Activated CD8-positive, alpha-beta T cell treated with anti-CD3 and anti-CD28 coated beads for 36 hours (primary cell): ENCODE measurements at regions of chr2 and their contacts with region 1.

Region 1: DNA sequence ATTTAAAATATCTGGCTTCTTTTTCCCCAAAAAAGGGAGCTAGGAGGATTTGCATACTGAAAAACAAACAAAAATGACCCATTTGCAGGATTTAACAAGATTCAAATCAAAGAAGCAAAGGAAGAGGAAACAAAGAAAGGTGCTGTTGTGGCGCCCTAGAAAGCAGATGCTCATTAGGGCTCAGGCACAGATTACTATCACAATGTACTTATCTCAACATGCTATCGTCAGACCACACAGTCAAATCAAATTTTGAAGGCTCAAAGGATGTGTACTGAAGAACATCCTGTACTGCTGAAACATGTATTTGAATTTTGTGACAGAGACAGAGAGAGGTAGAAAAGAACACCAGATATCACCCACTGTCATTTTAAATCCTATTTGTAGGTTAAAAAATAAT is 10.9 kb downstream of the RBMS1 start:
- DNase-seq: peak; percentile 41
- ATAC-seq: peak; percentile 73
- H3K4me3 Mint-ChIP-seq: peak overlapping the region; percentile 56
- H3K27ac Mint-ChIP-seq: peak overlapping the region; percentile 85
- H3K4me1 Mint-ChIP-seq: peaks cover 67% of the 10 kb centered on the region
- H3K27me3 Mint-ChIP-seq: no peaks in the 10 kb centered on the region
- CTCF ChIP-seq: no peak

Region 2: GRCh38 chr2:160210599-160211138 is 272.0 kb before region 1 on chr2:
- CTCF ChIA-PET with region 1: no interaction called
- POLR2A ChIA-PET with region 1: no interaction called
- intact Hi-C with region 1: no loop called
- DNase-seq: peak; percentile 82
- ATAC-seq: peak; percentile 86
- H3K4me3 Mint-ChIP-seq: no peak overlapping the region
- H3K27ac Mint-ChIP-seq: no peak overlapping the region
- H3K4me1 Mint-ChIP-seq: peaks cover 32% of the 10 kb centered on the region
- H3K27me3 Mint-ChIP-seq: peaks cover 5% of the 10 kb centered on the region
- CTCF ChIP-seq: peak; percentile 90

Region 3: GRCh38 chr2:160332318-160332717 is 150.4 kb before region 1 on chr2:
- CTCF ChIA-PET with region 1: no interaction called
- POLR2A ChIA-PET with region 1: no interaction called
- intact Hi-C with region 1: loop called (anchors 10 kb)
- DNase-seq: peak; percentile 22
- ATAC-seq: peak; percentile 45
- H3K4me3 Mint-ChIP-seq: peak overlapping the region; percentile 11
- H3K27ac Mint-ChIP-seq: peak overlapping the region; percentile 76
- H3K4me1 Mint-ChIP-seq: peaks cover 91% of the 10 kb centered on the region
- H3K27me3 Mint-ChIP-seq: no peaks in the 10 kb centered on the region
- CTCF ChIP-seq: no peak

Region 4: GRCh38 chr2:160493227-160494028 is 10.8 kb after region 1 on chr2 and contains the start of gene RBMS1:
- CTCF ChIA-PET with region 1: interaction called, 10 read pairs
- POLR2A ChIA-PET with region 1: interaction called, 3 read pairs
- intact Hi-C with region 1: no loop called
- DNase-seq: peak; percentile 56
- ATAC-seq: peak; percentile 32
- H3K4me3 Mint-ChIP-seq: peak within 1 kb of the TSS; percentile 93
- H3K27ac Mint-ChIP-seq: peak within 1 kb of the TSS; percentile 94
- H3K4me1 Mint-ChIP-seq: peaks cover 43% of the 10 kb centered on the region
- H3K27me3 Mint-ChIP-seq: no peaks in the 10 kb centered on the region
- CTCF ChIP-seq: no peak
- total RNA-seq, gene RBMS1: 35.8 to 38.6 TPM

Region 5: DNA sequence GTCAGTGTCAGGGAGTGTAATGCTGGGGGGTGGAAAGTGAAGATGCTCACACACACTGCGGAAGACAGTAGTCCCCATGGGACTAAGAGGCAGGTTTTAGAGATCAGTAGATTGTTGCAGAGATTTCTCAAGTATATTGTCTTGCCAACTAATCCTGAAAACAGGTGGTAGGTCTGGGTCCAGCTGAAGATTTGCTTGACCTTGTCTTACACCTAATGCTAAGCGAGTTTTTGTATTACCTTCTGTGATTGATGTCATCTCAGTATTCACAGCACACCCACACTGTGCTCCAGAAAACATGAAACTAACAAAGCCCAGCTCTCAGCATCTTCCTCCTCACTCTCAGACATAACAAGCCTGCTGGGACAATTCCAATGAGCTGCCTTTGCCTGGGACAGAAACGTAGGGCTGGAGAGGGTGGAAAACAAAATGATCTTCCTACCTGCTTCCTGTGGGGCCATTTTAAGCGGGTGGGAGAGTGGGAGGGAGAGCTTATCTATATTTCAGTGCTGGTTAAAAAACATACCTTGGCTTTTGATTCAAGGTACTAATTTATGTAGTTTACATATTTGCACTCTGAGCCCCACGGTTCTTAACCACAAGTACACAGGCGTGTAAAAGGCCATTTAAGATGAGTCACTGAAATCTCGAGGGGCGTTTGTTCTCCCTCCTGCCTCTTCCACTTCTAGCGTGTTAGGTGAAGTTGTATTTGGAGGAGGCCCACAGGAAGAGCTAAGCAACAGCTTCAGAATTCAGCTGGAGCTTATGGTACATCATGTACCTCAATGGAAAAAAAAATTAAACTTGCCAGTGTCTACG is 34.1 kb after region 1 on chr2:
- CTCF ChIA-PET with region 1: no interaction called
- POLR2A ChIA-PET with region 1: no interaction called
- intact Hi-C with region 1: no loop called
- DNase-seq: peak; percentile 48
- ATAC-seq: peak; percentile 89
- H3K4me3 Mint-ChIP-seq: peak overlapping the region; percentile 5
- H3K27ac Mint-ChIP-seq: peak overlapping the region; percentile 80
- H3K4me1 Mint-ChIP-seq: peaks cover 36% of the 10 kb centered on the region
- H3K27me3 Mint-ChIP-seq: no peaks in the 10 kb centered on the region
- CTCF ChIP-seq: no peak